PC-3 (cell line): ENCODE measurements at regions of chr5 and their contacts with region 1.

Region 1: DNA sequence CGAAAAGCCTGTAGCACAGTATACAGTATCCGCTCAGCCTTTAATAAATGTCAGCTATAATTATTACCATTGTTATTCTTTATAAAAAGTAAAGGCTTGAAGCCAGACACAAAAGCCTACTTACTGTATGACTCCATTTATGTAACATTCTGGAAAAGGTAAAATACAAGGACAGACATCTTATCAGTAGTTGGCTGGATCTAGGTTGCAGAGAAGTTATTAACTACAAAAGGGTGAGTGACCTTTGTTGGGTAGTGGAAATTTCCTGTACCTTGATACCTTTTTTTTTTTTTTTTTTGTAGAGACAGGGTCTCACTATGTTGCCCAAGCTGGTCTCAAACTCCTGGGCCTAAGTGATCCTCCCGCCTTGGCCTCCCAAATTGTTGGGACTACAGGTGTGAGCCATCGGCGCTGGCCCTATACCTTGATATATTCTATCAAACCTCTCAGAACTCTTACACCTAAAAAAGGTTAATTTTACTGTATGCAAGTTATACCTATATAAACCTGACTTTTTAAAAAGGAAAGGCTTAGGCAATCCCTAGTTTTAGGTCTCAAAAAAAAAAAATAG is 6.0 kb downstream of the HDAC3 start:
- DNase-seq: no peak
- ATAC-seq: no peak
- H3K4me3 ChIP-seq: no peak overlapping the region
- H3K27ac ChIP-seq: no peak overlapping the region
- H3K4me1 ChIP-seq: peaks cover 10% of the 10 kb centered on the region; the same call in 1 of the 2 replicates
- H3K27me3 ChIP-seq: no peaks in the 10 kb centered on the region
- CTCF ChIP-seq: no peak

Region 2: DNA sequence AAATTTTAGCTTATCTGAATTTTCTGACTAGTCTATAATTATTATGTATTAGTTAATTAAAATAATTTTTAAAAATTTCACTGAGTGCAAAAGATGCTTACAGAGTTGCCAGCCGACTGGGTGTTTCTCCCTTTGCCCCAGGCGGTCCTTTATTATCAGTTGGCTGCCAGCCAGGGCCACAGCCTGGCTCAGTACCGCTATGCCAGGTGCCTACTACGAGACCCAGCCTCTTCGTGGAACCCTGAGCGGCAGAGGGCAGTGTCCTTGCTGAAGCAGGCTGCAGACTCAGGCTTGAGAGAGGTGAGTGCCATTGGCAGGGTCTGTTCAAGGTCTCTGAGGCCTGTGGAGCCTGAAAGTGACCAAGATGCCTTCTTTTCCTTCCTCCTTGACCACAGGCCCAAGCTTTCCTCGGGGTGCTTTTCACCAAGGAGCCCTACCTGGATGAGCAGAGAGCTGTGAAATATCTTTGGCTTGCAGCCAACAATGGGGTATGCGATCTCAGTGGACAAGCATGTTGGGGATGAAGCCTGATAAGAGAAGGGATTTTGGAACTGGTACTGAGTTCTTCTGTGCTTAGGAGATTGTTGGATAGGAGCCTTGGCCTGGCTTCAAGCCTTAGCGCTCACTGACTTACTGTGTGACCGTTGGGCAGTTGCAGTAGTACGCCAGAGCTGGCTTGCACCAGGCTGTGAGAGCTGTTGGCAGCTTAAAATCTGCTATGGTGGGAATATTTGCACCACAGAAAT is 303.6 kb after region 1 on chr5:
- CTCF ChIA-PET with region 1: no interaction called
- POLR2A ChIA-PET with region 1: interaction called, 13 read pairs
- intact Hi-C with region 1: no loop called
- DNase-seq: no peak
- ATAC-seq: no peak
- H3K4me3 ChIP-seq: no peak overlapping the region
- H3K27ac ChIP-seq: no peak overlapping the region
- H3K4me1 ChIP-seq: no peaks in the 10 kb centered on the region
- H3K27me3 ChIP-seq: no peaks in the 10 kb centered on the region
- CTCF ChIP-seq: no peak